Activated CD4-positive, alpha-beta T cell treated with anti-CD3 and anti-CD28 coated beads, Interleukin-2, amount 10 ng/mL, durations not matched to agents 24 days and 14 days (primary cell): ENCODE measurements at regions of chr2 and their contacts with region 1.

Region 1: DNA sequence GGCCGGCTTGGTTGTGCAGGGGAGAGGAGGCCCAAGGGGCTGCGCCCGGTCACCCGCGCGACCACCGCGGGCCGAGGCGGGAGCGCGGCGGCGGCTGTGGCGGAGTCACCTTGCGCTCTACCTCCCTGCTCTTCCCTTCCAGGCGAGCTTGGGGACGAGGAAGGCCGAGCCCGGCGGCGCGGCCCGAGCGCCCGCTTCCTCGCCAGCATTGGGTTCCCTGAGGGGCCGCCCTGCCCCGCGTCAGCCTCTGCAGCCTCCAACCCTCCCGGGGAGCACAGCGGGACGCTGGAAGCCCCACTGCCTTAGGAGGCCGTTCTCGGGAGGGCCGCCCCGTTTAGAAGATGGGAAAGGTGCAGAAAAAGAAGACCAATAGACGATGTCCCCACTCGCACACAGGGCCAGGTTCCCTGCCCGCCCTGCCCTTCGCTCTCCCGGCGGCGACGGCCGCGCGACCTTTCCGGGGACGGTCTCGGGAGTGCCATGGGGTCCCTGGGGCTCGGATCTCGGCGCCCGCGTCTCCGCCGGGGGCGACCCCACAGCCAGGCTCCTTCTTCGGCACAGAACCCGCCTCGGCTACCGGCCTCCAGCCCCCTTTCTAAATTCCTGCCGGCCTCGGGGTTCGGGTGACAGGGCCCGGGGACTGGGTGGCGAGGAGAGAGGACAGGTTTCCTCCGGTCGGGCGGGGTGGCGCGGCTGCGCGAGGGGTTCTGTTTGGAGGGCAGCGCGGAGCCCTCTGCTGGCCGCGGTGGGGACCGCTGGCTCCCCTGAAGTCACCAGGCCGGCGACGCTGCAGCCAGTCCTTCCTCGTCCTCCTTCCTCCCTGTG is 85.5 kb downstream of the HS6ST1 start:
- DNase-seq: peak; percentile 95
- H3K4me3 Mint-ChIP-seq: peak overlapping the region; percentile 80
- H3K27ac Mint-ChIP-seq: no peak overlapping the region
- H3K4me1 Mint-ChIP-seq: peaks cover 2% of the 10 kb centered on the region
- H3K27me3 Mint-ChIP-seq: peaks cover 13% of the 10 kb centered on the region

Region 2: GRCh38 chr2:128062571-128062970 is 170.6 kb before region 1 on chr2:
- intact Hi-C with region 1: loop called (anchors 1 kb)
- DNase-seq: no peak
- H3K4me3 Mint-ChIP-seq: no peak overlapping the region
- H3K27ac Mint-ChIP-seq: no peak overlapping the region
- H3K4me1 Mint-ChIP-seq: no peaks in the 10 kb centered on the region
- H3K27me3 Mint-ChIP-seq: peaks cover 1% of the 10 kb centered on the region

Region 3: GRCh38 chr2:128178650-128179460 is 54.3 kb before region 1 on chr2:
- intact Hi-C with region 1: loop called (anchors 1 kb)
- DNase-seq: peak; percentile 85
- H3K4me3 Mint-ChIP-seq: no peak overlapping the region
- H3K27ac Mint-ChIP-seq: no peak overlapping the region
- H3K4me1 Mint-ChIP-seq: peaks cover 7% of the 10 kb centered on the region
- H3K27me3 Mint-ChIP-seq: no peaks in the 10 kb centered on the region